ENCODE measurements at regions of chr2 and their contacts with region 1.

Region 1: DNA sequence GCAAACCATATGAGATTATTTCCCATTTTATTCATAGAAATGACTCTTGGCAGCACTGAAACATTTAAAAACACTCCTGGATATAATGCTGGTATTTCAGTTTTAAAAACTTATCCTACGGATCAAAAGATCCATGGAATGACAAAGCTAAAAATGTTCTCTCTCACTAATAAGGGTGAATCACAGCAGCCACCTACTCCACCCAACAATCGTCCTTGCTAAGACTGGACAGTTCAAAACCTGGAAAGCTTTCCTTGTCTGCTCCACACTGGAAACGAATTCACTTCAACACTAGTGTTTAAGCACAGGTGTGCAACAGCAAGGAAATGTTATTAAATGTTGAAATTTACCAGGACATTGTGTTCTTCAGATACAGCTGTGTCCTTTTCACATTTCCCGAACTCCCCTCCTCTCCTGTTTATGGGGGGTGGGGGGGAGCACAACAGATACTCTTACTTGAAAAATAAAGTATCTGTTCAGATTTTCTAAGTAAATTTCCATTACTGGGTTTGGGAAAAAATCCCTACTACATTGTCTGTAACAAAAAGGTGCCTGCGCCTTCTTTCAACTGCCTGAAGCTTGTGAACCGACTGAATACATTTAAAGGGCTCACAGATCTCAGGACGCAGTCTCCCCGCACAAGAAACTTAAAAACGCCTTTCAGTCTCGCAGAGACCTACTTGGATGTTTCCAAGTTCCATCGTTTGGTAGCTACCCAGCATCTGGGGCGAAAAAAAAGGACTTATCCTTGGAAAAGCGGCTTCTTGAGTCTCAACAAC is 1.4 kb downstream of the YWHAQ start:
- DNase-seq: peak in 5 of 7 donors; percentile 36 to 59 (median 44)
- H3K4me3 ChIP-seq: peak overlapping the region; percentile 30 to 90 (median 58)
- H3K27ac ChIP-seq: peak overlapping the region; percentile 79 to 98 (median 94)
- H3K4me1 ChIP-seq: peaks cover 17 to 41% of the 10 kb centered on the region in 2 donors
- H3K27me3 ChIP-seq: no peaks in the 10 kb centered on the region
- CTCF ChIP-seq: no peak
- POLR2A ChIP-seq: peak in 1 of 2 donors; percentile 51

Region 2: GRCh38 chr2:9573840-9574239 is 55.6 kb before region 1 on chr2:
- intact Hi-C with region 1: loop called in 1 of 2 experiments (anchors 10 kb)
- DNase-seq: no peak
- H3K4me3 ChIP-seq: no peak overlapping the region
- H3K27ac ChIP-seq: peak overlapping the region in 3 of 5 donors; percentile 28 to 53 (median 40)
- H3K4me1 ChIP-seq: peaks cover 0 to 14% of the 10 kb centered on the region in 2 donors
- H3K27me3 ChIP-seq: no peaks in the 10 kb centered on the region
- CTCF ChIP-seq: peak in 1 of 6 experiments; percentile 19
- POLR2A ChIP-seq: no peak